Gastrocnemius medialis (tissue), 4 donors: ENCODE measurements at regions of chr9 and their contacts with region 1.

Region 1: GRCh38 chr9:99601571-99602111 is 220.0 kb upstream of the NR4A3 start:
- DNase-seq: no peak
- ATAC-seq: no peak
- H3K4me3 ChIP-seq: no peak overlapping the region
- H3K27ac ChIP-seq: no peak overlapping the region
- H3K4me1 ChIP-seq: no peaks in the 10 kb centered on the region
- H3K27me3 ChIP-seq: no peaks in the 10 kb centered on the region
- CTCF ChIP-seq: no peak
- POLR2A ChIP-seq: no peak

Region 2: DNA sequence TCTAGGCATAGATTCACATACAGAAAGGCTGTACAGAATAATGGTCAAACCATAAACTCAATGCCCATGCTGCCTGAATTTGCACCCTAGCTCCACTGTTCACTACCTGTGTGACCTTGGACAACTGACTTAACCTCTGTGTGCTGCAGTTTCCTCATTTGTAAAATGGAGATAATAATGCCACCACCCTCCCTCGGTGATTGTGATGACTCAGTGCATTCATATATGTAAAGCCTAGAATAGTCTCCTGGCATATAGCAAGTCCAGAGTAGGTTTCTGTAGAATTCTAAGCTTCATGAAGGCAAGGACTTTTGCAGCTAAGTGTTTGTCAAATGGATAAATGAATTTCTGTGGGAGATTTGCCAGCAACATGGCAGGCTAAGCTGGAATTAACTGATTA is 77.8 kb before region 1 on chr9:
- in situ Hi-C with region 1: no loop called
- intact Hi-C with region 1: loop called (anchors 10 kb)
- DNase-seq: no peak
- ATAC-seq: no peak
- H3K4me3 ChIP-seq: no peak overlapping the region
- H3K27ac ChIP-seq: no peak overlapping the region
- H3K4me1 ChIP-seq: no peaks in the 10 kb centered on the region
- H3K27me3 ChIP-seq: no peaks in the 10 kb centered on the region
- CTCF ChIP-seq: no peak
- POLR2A ChIP-seq: no peak